ENCODE measurements at regions of chr2 and their contacts with region 1.

Region 1: GRCh38 chr2:25323042-25323514 is 18.6 kb downstream of the DNMT3A start:
- DNase-seq: no peak
- H3K4me3 Mint-ChIP-seq: no peak overlapping the region
- H3K27ac Mint-ChIP-seq: no peak overlapping the region
- H3K4me1 Mint-ChIP-seq: no peaks in the 10 kb centered on the region
- H3K27me3 Mint-ChIP-seq: no peaks in the 10 kb centered on the region
- CTCF ChIP-seq: no peak

Region 2: DNA sequence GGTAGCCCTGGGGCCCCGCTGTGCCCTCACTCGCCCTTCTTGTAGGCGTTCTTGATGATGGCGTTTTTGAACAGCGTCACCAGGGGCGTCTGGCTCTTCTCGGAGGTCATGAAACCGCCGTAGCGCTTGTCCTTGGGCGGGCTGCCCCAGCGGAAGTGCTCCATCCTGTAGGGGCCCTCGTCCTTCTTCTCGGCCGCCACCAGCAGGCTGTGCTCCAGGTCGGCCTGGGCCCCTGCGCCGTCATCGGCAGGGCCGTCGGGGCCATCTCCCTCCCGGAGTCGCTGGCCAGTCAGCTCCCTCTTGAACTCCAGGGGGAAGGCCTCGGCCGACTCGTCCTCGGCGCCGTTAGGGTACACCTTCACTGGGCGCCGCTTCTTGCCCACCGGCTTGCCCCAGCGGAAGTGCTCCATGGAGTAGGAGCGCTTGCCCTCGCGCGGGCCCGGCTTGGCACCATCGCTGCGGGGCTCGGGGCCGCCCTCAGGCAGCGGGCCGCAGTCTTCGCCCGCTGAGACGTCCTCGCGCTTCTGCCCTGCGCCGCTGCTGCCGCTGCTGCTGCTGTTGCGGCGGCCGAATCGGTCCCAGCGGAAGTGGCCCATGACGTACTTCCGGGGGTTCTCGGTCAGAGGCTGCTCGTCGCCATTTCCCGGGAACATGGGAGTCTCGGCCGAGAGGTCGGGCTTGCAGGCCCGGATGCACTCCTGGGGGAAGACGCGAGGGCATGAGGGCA is 161.9 kb before region 1 on chr2:
- CTCF ChIA-PET with region 1: no interaction called
- intact Hi-C with region 1: no loop called
- DNase-seq: no peak
- H3K4me3 Mint-ChIP-seq: no peak overlapping the region
- H3K27ac Mint-ChIP-seq: no peak overlapping the region
- H3K4me1 Mint-ChIP-seq: no peaks in the 10 kb centered on the region
- H3K27me3 Mint-ChIP-seq: peaks cover 56% of the 10 kb centered on the region
- CTCF ChIP-seq: no peak

Region 3: GRCh38 chr2:25473131-25473530 is 150.1 kb after region 1 on chr2:
- CTCF ChIA-PET with region 1: interaction called, 10 read pairs
- intact Hi-C with region 1: no loop called
- DNase-seq: no peak
- H3K4me3 Mint-ChIP-seq: no peak overlapping the region
- H3K27ac Mint-ChIP-seq: no peak overlapping the region
- H3K4me1 Mint-ChIP-seq: peaks cover 9% of the 10 kb centered on the region
- H3K27me3 Mint-ChIP-seq: no peaks in the 10 kb centered on the region
- CTCF ChIP-seq: no peak

Region 4: DNA sequence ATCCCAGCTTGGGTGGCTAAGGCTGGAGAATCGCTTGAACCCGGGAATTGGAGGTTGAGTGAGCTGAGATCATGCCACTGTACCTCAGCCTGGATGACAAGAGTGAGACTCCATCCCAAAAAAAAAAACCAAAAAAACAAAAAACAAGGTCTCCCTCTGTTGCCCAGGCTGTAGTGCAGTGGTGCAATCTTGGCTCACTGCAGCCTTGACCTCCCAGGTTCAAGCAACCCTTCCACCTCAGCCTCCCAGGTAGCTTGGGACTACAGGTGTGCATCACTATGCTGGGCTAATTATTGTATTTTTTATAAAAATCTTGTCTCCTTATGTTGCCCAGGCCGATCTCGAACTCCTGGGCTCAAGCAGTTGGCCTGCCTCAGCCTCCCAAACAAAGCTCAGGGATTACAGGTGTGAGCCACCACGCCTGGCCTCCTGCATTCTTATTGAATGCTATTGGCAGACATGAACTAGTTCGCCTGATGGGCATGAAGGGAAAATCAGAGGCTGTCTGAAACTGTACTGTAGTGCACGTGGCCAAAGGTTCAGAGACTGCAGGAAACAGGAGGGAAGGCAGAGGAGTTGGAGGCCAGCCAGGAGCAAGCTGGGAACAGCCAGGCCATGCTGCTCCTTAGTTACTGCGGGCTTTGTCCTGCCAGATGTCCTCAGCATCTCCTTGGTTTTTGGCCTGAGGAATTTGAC is 571.2 kb after region 1 on chr2:
- CTCF ChIA-PET with region 1: no interaction called
- intact Hi-C with region 1: no loop called
- DNase-seq: peak; percentile 13
- H3K4me3 Mint-ChIP-seq: no peak overlapping the region
- H3K27ac Mint-ChIP-seq: no peak overlapping the region
- H3K4me1 Mint-ChIP-seq: peaks cover 8% of the 10 kb centered on the region
- H3K27me3 Mint-ChIP-seq: peaks cover 6% of the 10 kb centered on the region
- CTCF ChIP-seq: no peak

Measured in Calu3 (cell line).